Right lobe of liver (tissue), 6 donors: ENCODE measurements at regions of chr12 and their contacts with region 1.

Region 1: DNA sequence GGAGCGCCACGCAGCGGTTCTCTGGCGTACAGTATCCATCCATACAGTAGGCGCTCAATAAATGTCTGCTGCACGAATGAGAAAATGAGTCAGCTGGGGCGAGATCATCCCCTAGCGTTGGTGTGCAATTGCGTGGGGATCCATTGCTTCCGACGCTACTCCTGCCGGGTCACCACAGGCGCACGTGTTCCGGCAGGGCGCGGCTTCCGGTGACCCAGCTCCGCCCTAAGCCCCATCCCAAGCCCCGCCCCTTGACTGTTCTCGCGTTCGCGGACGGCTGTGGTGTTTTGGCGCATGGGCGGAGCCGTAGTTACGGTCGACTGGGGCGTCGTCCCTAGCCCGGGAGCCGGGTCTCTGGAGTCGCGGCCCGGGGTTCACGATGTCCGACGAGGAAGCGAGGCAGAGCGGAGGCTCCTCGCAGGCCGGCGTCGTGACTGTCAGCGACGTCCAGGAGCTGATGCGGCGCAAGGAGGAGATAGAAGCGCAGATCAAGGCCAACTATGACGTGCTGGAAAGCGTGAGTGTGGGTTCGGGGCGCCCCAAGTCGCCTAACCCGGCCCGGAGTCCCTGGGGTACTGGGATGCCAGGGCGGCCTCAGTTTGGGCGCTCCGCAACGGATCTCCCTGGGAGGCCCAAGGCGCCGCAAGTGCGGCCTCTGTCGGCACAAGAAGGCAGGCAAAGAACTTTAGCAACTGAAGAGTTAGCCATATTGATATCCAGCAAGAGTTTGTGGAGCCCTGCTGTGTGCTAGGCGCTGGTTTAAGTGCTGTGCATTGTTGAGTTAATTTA is at the start of gene PSMD9:
- DNase-seq: peak; percentile 98
- ATAC-seq: peak; percentile 97 to 98 (median 98)
- H3K4me3 ChIP-seq: peak within 1 kb of the TSS; percentile 90 to 92 (median 91)
- H3K27ac ChIP-seq: peak within 1 kb of the TSS; percentile 91 to 95 (median 92)
- H3K4me1 ChIP-seq: peaks cover 0 to 12% (median 2%) of the 10 kb centered on the region in 4 donors
- H3K27me3 ChIP-seq: no peaks in the 10 kb centered on the region
- CTCF ChIP-seq: peak; percentile 63 to 73 (median 66)
- POLR2A ChIP-seq: peak; percentile 82
- total RNA-seq, gene PSMD9: 20.0 to 56.4 (median 28.4) TPM

Region 2: GRCh38 chr12:121773011-121773777 is 115.5 kb before region 1 on chr12:
- intact Hi-C with region 1: no loop called
- DNase-seq: peak; percentile 79 to 82 (median 82)
- ATAC-seq: peak; percentile 91 to 95 (median 92)
- H3K4me3 ChIP-seq: no peak overlapping the region
- H3K27ac ChIP-seq: no peak overlapping the region
- H3K4me1 ChIP-seq: peaks cover 0 to 9% (median 4%) of the 10 kb centered on the region in 4 donors
- H3K27me3 ChIP-seq: no peaks in the 10 kb centered on the region
- CTCF ChIP-seq: peak; percentile 79 to 95 (median 86)
- POLR2A ChIP-seq: no peak

Region 3: GRCh38 chr12:121802846-121803630 is 85.6 kb before region 1 on chr12:
- intact Hi-C with region 1: loop called in 1 of 2 experiments (anchors 10 kb)
- DNase-seq: peak; percentile 90 to 93 (median 93)
- ATAC-seq: peak; percentile 41 to 46 (median 44)
- H3K4me3 ChIP-seq: peak overlapping the region; percentile 65 to 83 (median 67)
- H3K27ac ChIP-seq: peak overlapping the region; percentile 100
- H3K4me1 ChIP-seq: peaks cover 0 to 28% (median 5%) of the 10 kb centered on the region in 4 donors
- H3K27me3 ChIP-seq: no peaks in the 10 kb centered on the region
- CTCF ChIP-seq: no peak
- POLR2A ChIP-seq: peak; percentile 99

Region 4: DNA sequence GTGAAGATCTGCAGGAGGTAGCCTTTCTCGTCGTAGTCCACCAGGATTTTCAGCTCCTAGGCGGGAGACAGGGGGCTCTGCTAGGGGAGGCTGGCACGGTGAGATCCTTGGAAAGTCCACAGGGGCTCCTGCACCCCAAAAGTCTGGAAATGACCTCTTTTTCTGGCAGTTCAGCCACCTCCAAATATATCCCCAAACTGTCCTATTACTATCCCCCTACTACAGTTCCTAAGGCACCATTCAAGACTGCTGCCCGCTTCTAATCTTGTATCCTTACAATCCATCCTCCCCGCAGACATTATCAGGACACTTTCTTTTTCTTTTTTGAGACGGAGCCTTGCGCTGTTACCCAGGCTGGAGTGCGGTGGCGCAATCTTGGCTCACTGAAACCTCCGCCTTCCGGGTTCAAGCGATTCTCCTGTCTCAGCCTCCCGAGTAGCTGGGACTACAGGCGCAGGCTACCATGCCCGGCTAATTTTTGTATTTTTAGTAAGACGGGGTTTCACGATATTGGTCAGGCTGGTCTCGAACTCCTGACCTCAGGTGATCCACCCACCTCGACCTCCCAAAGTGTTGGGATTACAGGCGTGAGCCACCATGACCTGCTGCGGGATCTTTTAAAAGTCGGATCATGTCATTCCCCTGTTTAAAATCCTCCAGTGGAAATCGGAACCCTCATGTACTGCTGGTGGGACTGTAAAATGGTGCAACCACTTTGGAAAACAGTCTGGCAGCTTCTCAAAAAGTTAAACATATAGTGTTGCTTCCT is 48.5 kb before region 1 on chr12:
- intact Hi-C with region 1: loop called in 1 of 2 experiments (anchors 5 kb)
- DNase-seq: no peak
- ATAC-seq: no peak
- H3K4me3 ChIP-seq: peak overlapping the region; percentile 44 to 47 (median 46)
- H3K27ac ChIP-seq: peak overlapping the region in 2 of 3 donors; percentile 10 to 31
- H3K4me1 ChIP-seq: no peaks in the 10 kb centered on the region
- H3K27me3 ChIP-seq: no peaks in the 10 kb centered on the region
- CTCF ChIP-seq: no peak
- POLR2A ChIP-seq: no peak